ENCODE measurements at regions of chr16 and their contacts with region 1.

Region 1: DNA sequence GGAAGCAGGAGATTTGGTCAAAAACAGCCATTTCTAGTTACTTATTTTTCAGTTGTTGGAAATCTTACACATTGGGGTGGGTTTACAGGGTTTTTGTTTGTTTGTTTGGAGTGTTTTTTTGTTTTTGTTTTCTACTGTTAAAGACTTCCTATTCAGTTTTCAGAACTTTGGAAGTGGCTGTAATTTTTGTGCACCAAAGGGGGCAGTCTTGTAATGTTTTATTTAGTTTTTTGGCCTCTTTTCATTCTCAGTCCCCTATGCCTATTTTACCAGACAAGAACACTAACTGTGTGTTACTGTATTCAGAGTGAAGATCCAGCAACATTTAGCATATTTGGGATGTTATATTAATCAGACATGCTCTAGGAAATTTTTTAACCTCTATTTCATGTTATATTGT is 20.6 kb downstream of the TPPP3 start:
- DNase-seq: no peak
- H3K4me3 ChIP-seq: no peak overlapping the region
- H3K27ac ChIP-seq: no peak overlapping the region
- H3K4me1 ChIP-seq: no peaks in the 10 kb centered on the region
- H3K27me3 ChIP-seq: peaks cover 0 to 4% (median 0%) of the 10 kb centered on the region in 3 donors
- CTCF ChIP-seq: peak in 2 of 4 experiments; percentile 4 to 33
- EP300 ChIP-seq: no peak
- POLR2A ChIP-seq: no peak

Region 2: DNA sequence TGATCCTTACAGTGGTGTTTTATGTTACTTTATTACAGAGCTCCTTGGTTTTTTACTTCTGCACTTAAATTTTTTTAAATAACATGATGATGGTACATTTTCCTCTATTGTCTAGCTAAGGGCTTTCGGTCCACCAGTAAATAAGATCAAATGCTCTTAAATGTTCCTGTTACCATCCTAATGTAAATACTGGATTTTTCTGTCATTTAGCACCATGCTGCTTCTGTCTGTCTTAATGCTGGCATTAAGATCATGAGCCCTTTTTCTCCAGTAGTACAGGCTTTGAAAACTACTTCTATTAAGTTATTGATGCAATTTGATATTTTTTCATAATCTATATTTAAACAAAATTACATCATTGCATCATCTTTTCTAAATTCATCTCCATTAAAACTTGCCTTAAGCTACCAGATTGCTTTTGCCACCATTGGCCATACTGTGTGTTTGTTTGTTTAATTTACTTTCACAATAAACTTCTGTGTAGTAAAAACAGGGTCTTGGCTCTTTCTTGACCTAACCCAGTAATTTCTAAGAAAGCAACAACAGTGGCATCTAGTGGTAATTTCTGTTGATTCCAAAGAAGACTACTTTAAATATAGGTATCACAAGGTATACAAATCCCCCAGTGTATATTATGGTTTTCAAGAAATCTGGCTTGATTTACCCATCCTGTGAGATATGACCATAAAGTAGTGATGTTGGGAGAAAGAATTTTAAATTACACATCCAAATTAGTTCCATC is 271.9 kb before region 1 on chr16:
- intact Hi-C with region 1: no loop called
- DNase-seq: no peak
- H3K4me3 ChIP-seq: no peak overlapping the region
- H3K27ac ChIP-seq: no peak overlapping the region
- H3K4me1 ChIP-seq: no peaks in the 10 kb centered on the region
- H3K27me3 ChIP-seq: no peaks in the 10 kb centered on the region
- CTCF ChIP-seq: no peak
- EP300 ChIP-seq: no peak
- POLR2A ChIP-seq: no peak

Region 3: DNA sequence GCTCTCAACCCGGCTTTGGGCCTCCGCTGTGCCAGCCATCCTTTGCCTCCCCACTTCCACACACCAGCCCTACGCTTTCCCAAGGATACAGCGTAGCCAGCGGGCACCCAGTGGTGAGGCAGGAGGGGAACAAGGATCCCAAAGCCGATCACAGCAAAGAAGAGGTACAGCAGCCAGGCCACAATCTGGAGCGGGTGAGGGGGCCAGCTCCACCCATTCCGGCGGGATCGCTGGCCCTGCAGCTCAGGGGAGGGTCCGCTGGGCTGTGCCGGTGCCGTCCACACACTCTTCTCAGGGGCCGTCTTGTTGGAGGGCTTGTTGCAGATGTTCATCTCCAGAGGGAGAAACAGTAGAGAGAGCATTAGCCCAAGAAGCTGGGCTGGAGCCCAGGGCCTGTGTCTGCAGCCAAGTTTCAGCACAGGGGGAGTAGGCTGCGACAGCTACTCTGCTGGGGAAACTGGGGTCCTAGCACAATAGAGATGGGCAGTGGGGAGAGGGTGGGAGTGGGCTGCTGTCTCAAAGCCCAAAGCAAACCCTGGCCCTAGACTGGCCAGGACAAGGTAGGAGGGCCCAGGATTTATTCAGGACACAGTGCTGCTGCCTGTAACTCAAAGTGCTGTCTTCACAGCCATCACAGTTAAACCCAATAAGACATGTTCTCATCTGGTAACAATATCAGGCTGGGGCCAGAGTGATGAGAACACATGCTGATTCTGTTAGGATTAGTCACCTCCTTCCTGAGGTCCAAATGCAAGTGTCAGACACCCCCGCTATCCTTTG is 33.6 kb after region 1 on chr16:
- intact Hi-C with region 1: loop called (anchors 5 kb)
- DNase-seq: peak; percentile 80
- H3K4me3 ChIP-seq: no peak overlapping the region
- H3K27ac ChIP-seq: peak overlapping the region; percentile 25 to 62 (median 56)
- H3K4me1 ChIP-seq: peaks cover 0 to 17% (median 11%) of the 10 kb centered on the region in 4 donors
- H3K27me3 ChIP-seq: no peaks in the 10 kb centered on the region
- CTCF ChIP-seq: no peak
- EP300 ChIP-seq: no peak
- POLR2A ChIP-seq: no peak

Measured in sigmoid colon (tissue), 7 donors.